ENCODE measurements at regions of chr2 and their contacts with region 1.

Region 1: DNA sequence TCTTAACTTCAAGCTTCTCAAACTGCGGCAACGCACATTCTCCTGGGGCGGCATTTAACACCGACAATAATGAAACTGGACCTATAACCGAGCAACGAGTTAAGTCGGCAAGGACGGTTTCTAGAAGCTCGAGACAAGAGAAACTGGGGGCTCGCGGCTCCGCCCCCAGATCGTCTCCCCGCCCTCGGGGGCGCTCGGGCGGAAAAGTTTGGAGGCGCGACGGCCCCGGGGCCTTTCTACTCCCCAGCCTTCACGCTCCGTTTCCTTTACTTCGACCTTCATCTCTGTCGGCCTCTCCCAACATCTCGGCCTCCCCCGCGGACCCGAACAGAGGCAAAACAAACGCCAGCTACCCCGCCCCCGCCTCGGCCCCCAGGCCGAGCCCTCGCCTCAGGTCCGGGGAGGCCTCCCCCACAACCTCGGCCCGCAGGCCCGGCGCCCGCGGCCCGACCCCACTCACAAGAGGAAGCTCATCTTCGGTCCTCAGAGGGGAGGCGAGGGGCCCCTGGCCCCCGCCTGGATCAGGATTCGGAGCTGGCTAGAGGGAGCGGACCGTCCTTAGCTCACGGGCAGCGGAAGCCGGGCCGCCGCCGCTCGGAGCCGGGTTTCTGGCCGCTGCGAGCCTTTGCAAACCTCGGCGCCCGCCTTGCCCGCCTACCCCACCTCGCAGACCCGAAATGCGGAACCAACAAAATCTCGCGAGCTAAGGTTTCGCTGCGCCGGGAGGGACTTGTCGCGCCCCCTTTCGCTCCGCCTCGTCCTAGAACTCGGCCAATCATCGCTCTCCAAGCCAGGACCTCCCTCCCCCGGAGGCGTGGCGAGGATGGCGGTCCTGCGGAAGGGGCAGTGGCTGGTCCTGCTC is at the start of gene MOB1A:
- DNase-seq: peak; percentile 99
- ATAC-seq: peak; percentile 98
- H3K4me3 Mint-ChIP-seq: peak within 1 kb of the TSS; percentile 86
- H3K27ac Mint-ChIP-seq: peak within 1 kb of the TSS; percentile 94
- H3K4me1 Mint-ChIP-seq: peaks cover 14% of the 10 kb centered on the region
- H3K27me3 Mint-ChIP-seq: no peaks in the 10 kb centered on the region
- CTCF ChIP-seq: no peak
- total RNA-seq, gene MOB1A: 84.9 to 92.6 TPM (median 88.2 TPM) in 3 replicates

Region 2: DNA sequence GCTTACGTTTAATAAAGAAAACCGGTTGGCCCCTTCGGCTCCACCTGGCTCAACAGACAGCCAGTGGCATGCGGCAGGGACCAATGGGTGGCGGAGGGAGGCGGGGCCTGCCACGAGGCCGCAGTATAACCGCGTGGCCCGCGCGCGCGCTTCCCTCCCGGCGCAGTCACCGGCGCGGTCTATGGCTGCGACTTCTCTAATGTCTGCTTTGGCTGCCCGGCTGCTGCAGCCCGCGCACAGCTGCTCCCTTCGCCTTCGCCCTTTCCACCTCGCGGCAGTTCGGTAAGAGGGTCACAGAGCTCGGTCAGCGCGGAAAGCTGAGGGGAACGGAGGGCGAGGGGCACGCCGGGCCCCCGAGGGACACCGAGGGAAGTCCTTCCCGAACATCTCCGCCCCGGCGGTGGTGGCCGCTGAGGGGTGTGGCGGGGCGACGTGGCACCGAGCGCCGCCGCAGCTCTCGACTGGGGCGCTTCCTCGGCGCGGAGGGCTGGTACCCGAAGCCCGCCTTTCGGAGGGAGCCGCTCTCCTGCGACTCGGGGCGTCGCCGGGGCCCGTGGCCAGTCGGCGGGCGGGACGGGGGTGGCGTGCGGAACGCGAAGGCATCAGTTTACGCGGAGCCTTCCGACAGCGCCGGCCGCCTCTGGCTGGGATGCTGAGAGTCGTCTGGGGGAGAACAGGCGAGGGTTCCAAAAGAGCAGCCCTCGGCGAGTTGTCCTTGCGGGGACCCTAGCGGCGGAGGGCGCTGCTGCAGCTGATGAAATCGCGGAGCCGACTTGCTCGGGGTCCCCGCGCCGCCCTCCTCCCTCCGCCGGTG is 20.2 kb after region 1 on chr2 and contains the start of gene MTHFD2:
- CTCF ChIA-PET with region 1: interaction called, 15 read pairs
- POLR2A ChIA-PET with region 1: interaction called, 41 read pairs
- DNase-seq: peak; percentile 95
- ATAC-seq: peak; percentile 96
- H3K4me3 Mint-ChIP-seq: peak within 1 kb of the TSS; percentile 99
- H3K27ac Mint-ChIP-seq: peak within 1 kb of the TSS; percentile 100
- H3K4me1 Mint-ChIP-seq: peaks cover 31% of the 10 kb centered on the region
- H3K27me3 Mint-ChIP-seq: peaks cover 10% of the 10 kb centered on the region
- CTCF ChIP-seq: peak; percentile 80
- total RNA-seq, gene MTHFD2: 192 to 251 TPM (median 193 TPM) in 3 replicates